A549 (cell line): ENCODE measurements at regions of chr15 and their contacts with region 1.

Region 1: DNA sequence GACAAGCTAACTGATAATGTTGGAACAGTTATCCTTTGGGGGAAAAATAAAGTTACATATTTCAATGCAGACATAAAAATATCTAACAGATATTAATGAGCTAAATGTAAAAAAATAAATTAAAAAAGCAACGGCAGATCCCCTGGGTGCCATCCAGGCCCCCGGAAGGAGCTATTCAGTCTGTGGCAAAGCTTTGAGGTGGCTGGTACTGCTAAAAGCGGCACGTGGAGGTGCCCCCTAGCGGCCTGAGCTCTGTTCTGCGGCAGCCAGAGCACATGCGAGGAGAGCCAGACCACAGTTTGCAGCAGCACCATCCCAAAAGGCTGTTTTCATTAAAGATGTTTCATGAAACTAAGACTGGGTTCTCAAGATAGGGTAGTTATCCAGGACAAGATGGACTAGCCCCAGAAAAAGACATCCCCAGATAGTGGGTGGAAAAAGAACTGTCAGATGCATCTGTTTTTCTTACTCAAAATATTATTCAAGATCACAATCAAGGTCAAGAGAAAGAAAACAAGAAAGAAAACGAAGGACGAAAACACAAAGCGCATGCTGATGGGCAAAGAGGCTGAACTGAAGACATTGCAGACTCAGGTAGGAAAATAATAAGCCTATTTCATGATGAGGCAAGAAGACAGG is 18.7 kb downstream of the AP3S2 start:
- DNase-seq: peak; percentile 77 to 90
- ATAC-seq: peak; percentile 99 to 100
- H3K4me3 ChIP-seq: no peak overlapping the region
- H3K27ac ChIP-seq: no peak overlapping the region
- H3K4me1 ChIP-seq: no peaks in the 10 kb centered on the region
- CTCF ChIP-seq: peak; percentile 98
- EP300 ChIP-seq: no peak
- POLR2A ChIP-seq: no peak
- RAD21 ChIP-seq: peak; percentile 93 to 94

Region 2: GRCh38 chr15:89740137-89740536 is 134.9 kb before region 1 on chr15:
- CTCF ChIA-PET with region 1: interaction called, 66 read pairs
- POLR2A ChIA-PET with region 1: interaction called, 3 read pairs
- DNase-seq: peak; percentile 83 to 85
- ATAC-seq: peak; percentile 87 to 95
- H3K4me3 ChIP-seq: no peak overlapping the region
- H3K27ac ChIP-seq: peak overlapping the region in 1 of 2 experiments; percentile 36; a peak in 1 of 6 replicates
- H3K4me1 ChIP-seq: no peaks in the 10 kb centered on the region
- CTCF ChIP-seq: peak; percentile 96
- EP300 ChIP-seq: no peak
- POLR2A ChIP-seq: no peak
- RAD21 ChIP-seq: peak; percentile 89 to 95

Region 3: GRCh38 chr15:89781891-89782618 is 93.0 kb before region 1 on chr15:
- CTCF ChIA-PET with region 1: interaction called, 109 read pairs
- POLR2A ChIA-PET with region 1: no interaction called
- DNase-seq: no peak
- ATAC-seq: peak in 1 of 2 experiments; percentile 31; a peak in 3 of 6 replicates
- H3K4me3 ChIP-seq: no peak overlapping the region
- H3K27ac ChIP-seq: peak overlapping the region; percentile 8 to 27; a peak in 3 of 6 replicates
- H3K4me1 ChIP-seq: peaks cover 37% of the 10 kb centered on the region
- CTCF ChIP-seq: no peak
- EP300 ChIP-seq: no peak
- POLR2A ChIP-seq: no peak
- RAD21 ChIP-seq: no peak

Region 4: DNA sequence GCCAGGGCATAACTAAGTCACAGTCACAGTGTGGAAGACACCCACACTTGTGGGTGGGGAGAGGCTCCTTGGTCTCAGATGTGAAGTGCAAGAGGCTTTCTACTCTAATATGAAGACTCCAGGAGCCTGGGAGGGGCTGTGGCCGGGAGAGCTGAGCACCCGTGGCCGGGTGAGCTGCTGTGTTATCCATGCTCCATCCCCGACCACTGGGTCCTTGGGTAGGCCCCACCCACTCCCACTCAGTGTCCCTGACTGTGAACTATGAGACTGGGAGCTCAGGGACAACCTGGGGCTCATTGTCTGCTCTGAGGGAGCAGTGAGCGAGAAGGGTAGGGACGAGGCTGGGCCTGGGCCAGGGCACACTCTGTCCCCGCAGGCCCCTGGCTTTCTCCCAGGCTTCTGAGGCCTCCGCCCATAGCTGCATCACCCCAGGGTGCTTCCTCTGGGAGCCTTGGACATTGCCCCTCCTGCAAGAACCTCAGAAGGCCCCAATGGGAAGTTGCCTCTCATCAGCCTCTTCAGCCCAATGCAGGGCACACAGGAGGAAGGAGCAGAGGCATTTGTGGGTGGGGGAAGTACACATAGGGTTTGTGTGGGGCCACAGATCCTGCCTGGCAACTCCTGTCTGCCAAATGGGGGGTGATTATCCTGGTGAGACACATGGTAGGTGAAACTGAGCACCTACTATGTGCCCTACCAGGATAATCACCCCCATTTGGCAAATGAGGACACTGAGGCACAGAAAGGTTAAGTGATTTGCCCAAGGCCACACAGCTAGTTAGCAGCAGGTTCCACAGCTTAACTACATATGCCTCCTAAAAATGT is 62.8 kb before region 1 on chr15:
- CTCF ChIA-PET with region 1: interaction called, 11 read pairs
- POLR2A ChIA-PET with region 1: no interaction called
- DNase-seq: peak in 1 of 2 experiments; percentile 31
- ATAC-seq: peak; percentile 14 to 39; a peak in 5 of 6 replicates
- H3K4me3 ChIP-seq: no peak overlapping the region
- H3K27ac ChIP-seq: peak overlapping the region; percentile 39 to 42; a peak in 4 of 6 replicates
- H3K4me1 ChIP-seq: peaks cover 21% of the 10 kb centered on the region
- CTCF ChIP-seq: no peak
- EP300 ChIP-seq: no peak
- POLR2A ChIP-seq: no peak
- RAD21 ChIP-seq: no peak

Region 5: GRCh38 chr15:89851673-89852341 is 23.2 kb before region 1 on chr15:
- CTCF ChIA-PET with region 1: interaction called, 20 read pairs
- POLR2A ChIA-PET with region 1: no interaction called
- DNase-seq: no peak
- ATAC-seq: no peak
- H3K4me3 ChIP-seq: no peak overlapping the region
- H3K27ac ChIP-seq: peak overlapping the region in 1 of 2 experiments; percentile 3; a peak in 1 of 6 replicates
- H3K4me1 ChIP-seq: peaks cover 48% of the 10 kb centered on the region
- CTCF ChIP-seq: no peak
- EP300 ChIP-seq: no peak
- POLR2A ChIP-seq: no peak
- RAD21 ChIP-seq: no peak

Region 6: DNA sequence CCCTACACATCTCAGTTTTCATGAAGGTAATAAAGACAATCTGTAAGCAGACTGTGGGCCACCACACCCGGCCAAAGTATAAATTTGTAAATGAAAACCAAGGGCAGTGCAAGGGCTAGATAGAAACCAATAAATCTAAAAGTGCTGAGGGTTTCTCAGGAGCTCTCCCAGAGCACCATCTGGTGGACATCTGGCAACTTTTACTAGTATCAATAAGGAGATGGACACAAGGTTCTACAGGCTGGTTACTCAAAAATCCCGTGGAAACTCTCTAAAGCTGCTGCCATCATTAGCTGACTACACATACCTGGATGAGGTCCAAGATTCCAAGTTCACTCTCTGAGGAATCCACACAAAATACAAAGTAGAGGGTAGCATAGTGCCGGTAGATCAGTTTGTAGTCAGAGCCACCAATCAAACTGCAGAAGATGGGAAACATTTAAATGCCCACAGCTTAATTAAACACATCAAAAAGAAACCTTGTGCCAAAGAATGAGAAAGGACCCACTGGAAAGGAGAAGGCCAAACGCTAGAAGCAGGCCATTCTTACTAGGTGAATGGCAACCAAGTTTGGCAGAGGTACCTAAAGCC is 13.3 kb after region 1 on chr15:
- CTCF ChIA-PET with region 1: interaction called, 162 read pairs
- POLR2A ChIA-PET with region 1: interaction called, 11 read pairs
- DNase-seq: peak; percentile 44 to 69
- ATAC-seq: peak; percentile 90
- H3K4me3 ChIP-seq: no peak overlapping the region
- H3K27ac ChIP-seq: no peak overlapping the region
- H3K4me1 ChIP-seq: peaks cover 14% of the 10 kb centered on the region; the same call in 2 of the 3 replicates
- CTCF ChIP-seq: peak; percentile 79
- EP300 ChIP-seq: no peak
- POLR2A ChIP-seq: no peak
- RAD21 ChIP-seq: peak; percentile 76 to 84

Region 7: GRCh38 chr15:90126457-90127435 is 251.7 kb after region 1 on chr15:
- CTCF ChIA-PET with region 1: no interaction called
- POLR2A ChIA-PET with region 1: no interaction called
- DNase-seq: peak in 1 of 2 experiments; percentile 50
- ATAC-seq: peak; percentile 85 to 86
- H3K4me3 ChIP-seq: no peak overlapping the region
- H3K27ac ChIP-seq: peak overlapping the region in 1 of 2 experiments; percentile 56; a peak in 3 of 6 replicates
- H3K4me1 ChIP-seq: peaks cover 14% of the 10 kb centered on the region
- CTCF ChIP-seq: no peak
- EP300 ChIP-seq: no peak
- POLR2A ChIP-seq: no peak
- RAD21 ChIP-seq: no peak